ENCODE measurements at regions of chr11 and their contacts with region 1.

Region 1: GRCh38 chr11:108467091-108467823 is at the start of gene C11orf65:
- DNase-seq: peak; percentile 94 to 96
- H3K4me3 ChIP-seq: peak within 1 kb of the TSS in 2 of 3 donors; percentile 53 to 81
- H3K27ac ChIP-seq: peak within 1 kb of the TSS; percentile 95 to 99 (median 96)
- H3K4me1 ChIP-seq: peaks cover 0 to 5% of the 10 kb centered on the region in 2 donors
- H3K27me3 ChIP-seq: no peaks in the 10 kb centered on the region
- CTCF ChIP-seq: no peak
- POLR2A ChIP-seq: peak; percentile 92 to 98
- total RNA-seq, gene C11orf65: 1.3 to 3.8 (median 1.7) TPM

Region 2: DNA sequence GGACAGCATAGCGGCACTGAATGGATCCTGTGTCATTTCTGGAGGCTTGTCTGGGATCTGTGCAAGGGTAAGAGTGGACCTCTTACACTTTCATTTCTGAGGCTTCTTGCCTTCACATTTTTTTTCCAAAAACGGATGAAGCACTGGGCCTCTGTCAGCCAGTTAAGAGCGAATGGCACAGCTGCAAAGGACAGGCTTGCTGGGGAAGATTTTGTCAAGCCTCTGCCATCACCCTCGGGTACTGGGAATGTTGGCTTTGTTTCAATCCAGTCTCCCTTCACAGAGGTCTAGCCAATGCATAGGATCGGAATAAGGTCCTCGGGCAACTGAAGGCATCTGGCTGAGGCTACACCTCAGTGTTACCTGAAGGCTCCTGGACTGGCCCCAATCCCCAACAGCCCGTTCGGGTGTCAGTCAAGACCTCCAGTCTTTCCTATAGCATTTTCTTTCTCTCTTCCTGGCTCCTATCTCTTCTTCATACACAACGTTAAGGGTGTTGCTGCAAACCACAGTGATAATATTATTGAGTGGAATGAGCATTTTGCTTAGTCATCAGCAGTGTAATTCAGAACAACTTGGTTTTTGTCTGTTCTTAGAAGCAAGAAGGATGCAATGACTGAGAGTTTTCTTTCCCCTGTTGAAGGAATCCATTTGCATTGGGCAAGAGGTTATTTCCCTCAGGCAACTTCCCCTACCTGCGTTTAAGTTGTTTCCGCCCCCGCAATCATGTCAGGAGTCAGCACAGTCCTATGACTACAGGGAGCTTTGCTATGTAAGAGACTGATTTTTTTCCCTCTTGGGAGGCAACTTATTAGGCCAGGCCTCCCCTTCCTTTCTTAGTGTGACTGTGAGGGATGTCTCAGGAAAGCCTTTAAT is 267.6 kb before region 1 on chr11:
- intact Hi-C with region 1: no loop called
- DNase-seq: no peak
- H3K4me3 ChIP-seq: no peak overlapping the region
- H3K27ac ChIP-seq: no peak overlapping the region
- H3K4me1 ChIP-seq: no peaks in the 10 kb centered on the region
- H3K27me3 ChIP-seq: no peaks in the 10 kb centered on the region
- CTCF ChIP-seq: no peak
- POLR2A ChIP-seq: no peak

Region 3: DNA sequence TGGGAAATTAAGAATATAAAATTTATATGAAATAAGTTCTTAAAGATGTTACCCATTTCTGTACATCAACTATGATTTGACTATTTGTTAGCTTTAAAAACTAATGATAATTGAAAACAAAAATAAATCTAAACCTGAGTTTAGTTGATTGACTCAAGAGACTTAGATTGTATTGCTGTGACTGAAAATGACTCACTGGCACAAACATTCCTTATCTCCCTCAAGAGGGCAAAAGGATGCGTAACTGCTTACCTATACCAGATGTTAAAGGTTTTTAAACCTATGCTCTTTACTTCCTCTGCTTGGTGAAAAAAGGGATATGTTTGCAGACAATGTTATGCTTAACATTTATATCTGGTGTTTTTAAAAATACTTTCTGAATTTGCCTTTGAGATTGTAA is 214.1 kb before region 1 on chr11:
- intact Hi-C with region 1: no loop called
- DNase-seq: no peak
- H3K4me3 ChIP-seq: no peak overlapping the region
- H3K27ac ChIP-seq: no peak overlapping the region
- H3K4me1 ChIP-seq: no peaks in the 10 kb centered on the region
- H3K27me3 ChIP-seq: no peaks in the 10 kb centered on the region
- CTCF ChIP-seq: no peak
- POLR2A ChIP-seq: no peak

Region 4: DNA sequence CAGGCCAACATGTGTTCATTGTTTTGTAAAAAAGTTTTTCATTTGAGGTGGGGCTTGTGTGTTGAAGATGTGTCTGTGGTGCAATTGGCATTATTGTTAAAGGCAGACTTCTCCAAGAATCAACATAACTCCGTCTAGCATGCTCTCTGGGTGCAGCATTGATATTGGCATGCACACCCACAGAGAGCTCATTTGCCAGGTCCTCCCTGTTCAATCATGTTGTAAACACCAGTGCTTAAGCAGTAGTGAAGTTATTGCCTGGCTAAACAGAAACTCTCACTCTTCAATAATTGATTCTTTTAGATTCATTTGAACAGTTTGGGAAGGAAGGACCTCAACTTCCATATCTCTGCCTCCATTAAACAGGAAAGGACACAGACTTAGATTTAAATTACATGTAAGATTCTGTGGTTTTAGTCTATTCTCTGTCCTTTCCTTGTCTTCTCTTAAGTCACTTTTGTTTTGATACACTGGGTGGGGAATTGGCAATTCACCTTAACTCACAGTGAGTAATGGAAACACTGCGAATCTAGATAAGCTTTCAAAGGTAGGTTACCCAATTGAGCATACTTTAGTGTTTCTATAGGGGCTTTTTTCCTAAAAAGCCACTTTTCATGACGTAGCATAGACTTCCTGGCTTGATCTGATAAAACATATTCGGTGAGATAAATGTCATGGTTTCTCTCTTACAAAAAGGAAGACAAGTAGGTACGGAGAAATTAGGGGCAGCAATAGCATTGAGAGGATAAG is 157.1 kb after region 1 on chr11:
- intact Hi-C with region 1: no loop called
- DNase-seq: no peak
- H3K4me3 ChIP-seq: no peak overlapping the region
- H3K27ac ChIP-seq: no peak overlapping the region
- H3K4me1 ChIP-seq: no peaks in the 10 kb centered on the region
- H3K27me3 ChIP-seq: no peaks in the 10 kb centered on the region
- CTCF ChIP-seq: no peak
- POLR2A ChIP-seq: no peak

Region 5: DNA sequence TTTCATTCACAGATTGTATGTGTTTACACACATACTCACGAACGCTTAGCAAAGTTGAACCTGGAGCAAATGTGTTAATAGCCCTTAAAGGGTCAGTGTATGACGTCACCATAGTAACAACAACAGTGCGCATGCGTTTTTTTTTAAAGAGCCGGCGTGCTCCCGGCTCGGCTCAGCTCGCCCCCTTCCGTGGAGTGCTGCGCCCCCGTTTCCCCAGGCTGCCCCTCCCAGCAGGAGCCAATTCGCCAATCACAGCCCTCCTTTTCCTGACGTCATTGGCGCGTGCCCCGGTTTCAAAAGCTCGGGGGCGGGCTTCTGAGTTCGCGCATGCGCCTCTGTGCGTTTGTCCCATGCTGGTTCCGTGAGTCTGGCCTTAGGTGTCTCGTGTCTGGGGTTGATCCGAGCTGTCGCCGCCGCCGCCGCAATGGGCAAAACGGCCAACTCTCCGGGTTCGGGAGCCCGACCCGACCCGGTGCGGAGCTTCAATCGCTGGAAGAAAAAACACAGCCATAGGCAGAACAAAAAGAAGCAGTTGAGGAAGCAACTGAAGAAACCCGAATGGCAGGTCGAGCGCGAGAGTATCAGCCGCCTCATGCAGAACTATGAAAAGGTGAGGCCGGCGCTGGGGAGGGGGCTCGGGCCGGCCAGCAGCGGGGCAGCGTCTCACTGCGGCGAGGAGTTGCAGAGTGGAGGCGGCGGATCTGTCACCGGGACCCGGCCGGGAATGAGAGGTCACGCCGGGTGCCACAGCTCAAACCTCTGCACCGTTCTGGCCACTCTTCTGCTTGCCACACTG is 197.7 kb after region 1 on chr11 and contains the start of gene DDX10:
- intact Hi-C with region 1: loop called (anchors 10 kb)
- DNase-seq: peak; percentile 96 to 99
- H3K4me3 ChIP-seq: peak within 1 kb of the TSS; percentile 37 to 82 (median 53)
- H3K27ac ChIP-seq: peak within 1 kb of the TSS; percentile 34 to 47 (median 45)
- H3K4me1 ChIP-seq: peaks cover 9 to 23% of the 10 kb centered on the region in 2 donors
- H3K27me3 ChIP-seq: no peaks in the 10 kb centered on the region
- CTCF ChIP-seq: no peak
- POLR2A ChIP-seq: peak in 1 of 2 donors; percentile 67
- total RNA-seq, gene DDX10: 17.0 to 39.0 (median 34.3) TPM